Upper lobe of right lung (tissue), 1 donor: ENCODE measurements at regions of chr2 and their contacts with region 1.

Region 1: GRCh38 chr2:119476301-119477021 is 44.8 kb downstream of the TMEM37 start:
- DNase-seq: peak; percentile 79
- ATAC-seq: peak; percentile 92
- H3K4me3 ChIP-seq: no peak overlapping the region
- H3K27ac ChIP-seq: no peak overlapping the region
- H3K4me1 ChIP-seq: peaks cover 7% of the 10 kb centered on the region
- H3K27me3 ChIP-seq: peaks cover 3% of the 10 kb centered on the region
- CTCF ChIP-seq: peak; percentile 96

Region 2: GRCh38 chr2:119407430-119408220 is 68.8 kb before region 1 on chr2:
- intact Hi-C with region 1: loop called (anchors 5 kb)
- DNase-seq: no peak
- ATAC-seq: peak; percentile 91
- H3K4me3 ChIP-seq: no peak overlapping the region
- H3K27ac ChIP-seq: no peak overlapping the region
- H3K4me1 ChIP-seq: peaks cover 6% of the 10 kb centered on the region
- H3K27me3 ChIP-seq: no peaks in the 10 kb centered on the region
- CTCF ChIP-seq: peak; percentile 84

Region 3: DNA sequence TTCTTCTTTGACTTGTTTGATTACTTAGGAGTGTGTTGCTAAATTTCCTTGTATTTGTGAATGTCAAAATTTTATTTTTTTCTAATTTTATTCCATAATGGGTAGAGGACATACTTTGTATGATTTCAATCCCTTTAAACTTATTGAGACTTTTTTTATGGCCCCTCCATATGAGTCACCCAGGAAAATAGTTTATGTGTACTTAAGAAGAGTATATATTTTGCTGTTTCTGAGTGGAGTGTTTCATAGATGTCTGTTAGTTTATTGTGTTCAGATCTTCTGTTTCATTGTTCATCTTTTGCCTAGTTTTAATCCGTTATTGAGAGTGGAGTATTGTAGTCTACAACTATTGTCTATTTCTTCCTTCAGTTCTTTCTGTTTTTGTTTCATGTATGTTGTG is 618.3 kb after region 1 on chr2:
- intact Hi-C with region 1: no loop called
- DNase-seq: no peak
- ATAC-seq: no peak
- H3K4me3 ChIP-seq: no peak overlapping the region
- H3K27ac ChIP-seq: no peak overlapping the region
- H3K4me1 ChIP-seq: no peaks in the 10 kb centered on the region
- H3K27me3 ChIP-seq: no peaks in the 10 kb centered on the region
- CTCF ChIP-seq: no peak